HepG2 (cell line): ENCODE measurements at regions of chr7 and their contacts with region 1.

Region 1: GRCh38 chr7:149669121-149669818 is 104.1 kb downstream of the ZNF467 start:
- DNase-seq: peak; percentile 7
- ATAC-seq: no peak
- H3K4me3 ChIP-seq: no peak overlapping the region
- H3K27ac ChIP-seq: no peak overlapping the region
- H3K4me1 ChIP-seq: peaks cover 21% of the 10 kb centered on the region
- H3K27me3 ChIP-seq: no peaks in the 10 kb centered on the region
- CTCF ChIP-seq: peak; percentile 50
- EP300 ChIP-seq: no peak
- POLR2A ChIP-seq: no peak
- RAD21 ChIP-seq: no peak

Region 2: GRCh38 chr7:149547126-149547525 is 122.1 kb before region 1 on chr7:
- CTCF ChIA-PET with region 1: no interaction called
- POLR2A ChIA-PET with region 1: no interaction called
- in situ Hi-C with region 1: no loop called
- intact Hi-C with region 1: no loop called
- DNase-seq: no peak
- ATAC-seq: peak; percentile 63; the same call in 2 of the 3 replicates
- H3K4me3 ChIP-seq: no peak overlapping the region
- H3K27ac ChIP-seq: no peak overlapping the region
- H3K4me1 ChIP-seq: no peaks in the 10 kb centered on the region
- H3K27me3 ChIP-seq: no peaks in the 10 kb centered on the region
- CTCF ChIP-seq: peak; percentile 46
- EP300 ChIP-seq: no peak
- POLR2A ChIP-seq: no peak
- RAD21 ChIP-seq: no peak

Region 3: GRCh38 chr7:149714050-149714909 is 45.0 kb after region 1 on chr7:
- CTCF ChIA-PET with region 1: no interaction called
- POLR2A ChIA-PET with region 1: no interaction called
- in situ Hi-C with region 1: no loop called
- intact Hi-C with region 1: no loop called
- DNase-seq: peak; percentile 75
- ATAC-seq: peak; percentile 85
- H3K4me3 ChIP-seq: peak overlapping the region; percentile 51 to 75 (median 66); a peak in 5 of 6 replicates
- H3K27ac ChIP-seq: no peak overlapping the region
- H3K4me1 ChIP-seq: peaks cover 23% of the 10 kb centered on the region
- H3K27me3 ChIP-seq: no peaks in the 10 kb centered on the region
- CTCF ChIP-seq: no peak
- EP300 ChIP-seq: no peak
- POLR2A ChIP-seq: peak in 1 of 2 experiments; percentile 59; a peak in 2 of 4 replicates
- RAD21 ChIP-seq: no peak

Region 4: DNA sequence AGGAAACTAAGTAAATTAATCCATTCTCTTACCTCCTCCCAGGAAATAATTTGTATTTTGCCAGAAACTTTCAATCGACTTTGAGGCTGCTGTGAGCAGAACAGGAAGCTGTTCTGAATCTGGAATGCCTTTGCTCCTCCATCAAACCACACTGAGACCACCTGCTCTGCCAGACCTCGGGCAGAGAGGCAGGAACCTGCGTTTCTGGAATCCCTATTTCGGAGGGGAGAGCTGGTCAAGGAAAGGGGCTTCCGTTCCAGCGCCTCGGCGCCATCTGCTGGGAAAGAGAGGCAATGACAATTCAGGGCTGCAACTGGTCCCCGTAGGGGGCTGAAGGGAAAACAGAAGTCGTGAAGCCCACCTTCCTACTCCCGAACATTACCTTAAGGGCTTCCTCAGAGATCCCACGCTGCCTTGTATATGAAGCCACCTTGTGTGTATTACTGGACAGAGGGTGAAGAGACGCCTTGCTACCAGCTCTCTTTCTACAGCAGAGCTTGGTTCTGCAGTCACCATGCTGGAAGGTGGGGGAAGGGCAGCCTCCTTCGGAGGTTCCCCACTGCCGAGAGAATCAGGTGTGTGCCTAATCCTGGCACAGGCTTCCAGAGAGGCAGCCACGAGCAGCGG is 72.9 kb after region 1 on chr7:
- CTCF ChIA-PET with region 1: interaction called, 43 read pairs
- POLR2A ChIA-PET with region 1: no interaction called
- in situ Hi-C with region 1: no loop called
- intact Hi-C with region 1: no loop called
- DNase-seq: peak; percentile 41
- ATAC-seq: peak; percentile 92
- H3K4me3 ChIP-seq: peak overlapping the region; percentile 29 to 59 (median 48); a peak in 4 of 6 replicates
- H3K27ac ChIP-seq: no peak overlapping the region
- H3K4me1 ChIP-seq: peaks cover 12% of the 10 kb centered on the region
- H3K27me3 ChIP-seq: peaks cover 0 to 1% of the 10 kb centered on the region in 2 experiments; a peak in 2 of 5 replicates
- CTCF ChIP-seq: peak; percentile 93
- EP300 ChIP-seq: no peak
- POLR2A ChIP-seq: no peak
- RAD21 ChIP-seq: peak; percentile 77